Activated CD8-positive, alpha-beta T cell treated with anti-CD3 and anti-CD28 coated beads, Interleukin-2, amount 10 ng/mL, durations not matched to agents 7 days and 5 days (primary cell): ENCODE measurements at regions of chr16 and their contacts with region 1.

Region 1: DNA sequence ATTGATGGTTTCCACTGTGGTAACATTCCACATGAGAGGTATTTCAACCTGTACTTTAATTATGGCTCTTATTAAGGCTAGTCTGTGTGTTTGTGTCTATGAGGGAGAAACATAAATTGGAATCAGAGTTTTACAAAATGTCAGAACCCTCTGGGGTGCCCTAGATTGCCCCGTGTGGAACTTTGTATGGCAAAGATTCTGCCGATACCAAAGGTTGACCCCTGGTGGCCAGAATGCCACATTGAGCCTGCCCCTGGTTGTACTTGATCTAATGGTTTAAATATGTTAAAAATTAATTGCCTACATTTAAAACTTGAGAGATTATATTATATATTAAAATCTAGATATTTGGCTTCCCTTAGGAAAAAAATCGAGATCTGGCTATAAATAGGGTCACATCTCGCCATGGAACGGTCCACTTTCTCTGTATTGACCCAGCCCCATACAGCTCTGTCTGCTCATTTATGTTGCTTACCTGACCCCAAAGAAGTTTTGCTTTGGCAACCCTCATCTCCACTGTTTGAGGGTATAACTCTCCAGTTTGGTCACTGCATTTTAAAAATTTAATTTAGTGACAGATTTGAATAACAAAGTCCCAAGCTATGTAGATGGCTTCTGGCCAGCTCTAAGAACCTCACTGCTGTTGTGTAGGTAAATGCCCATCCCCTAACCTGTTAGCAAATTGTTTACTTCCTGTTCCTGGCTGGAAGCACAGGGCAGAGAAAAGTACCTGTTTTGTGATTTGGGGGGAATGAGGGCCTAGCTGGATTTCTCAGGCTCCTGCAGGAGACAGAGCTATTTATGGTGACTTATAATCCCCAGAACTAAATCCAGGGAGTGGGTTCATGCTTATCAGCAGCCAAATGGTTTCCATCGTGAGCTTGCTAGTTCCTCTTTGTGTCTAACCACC is 95.0 kb downstream of the PLCG2 start:
- DNase-seq: peak; percentile 81
- ATAC-seq: peak; percentile 90
- H3K4me3 Mint-ChIP-seq: no peak overlapping the region
- H3K27ac Mint-ChIP-seq: no peak overlapping the region
- H3K4me1 Mint-ChIP-seq: peaks cover 17% of the 10 kb centered on the region
- H3K27me3 Mint-ChIP-seq: peaks cover 4% of the 10 kb centered on the region

Region 2: DNA sequence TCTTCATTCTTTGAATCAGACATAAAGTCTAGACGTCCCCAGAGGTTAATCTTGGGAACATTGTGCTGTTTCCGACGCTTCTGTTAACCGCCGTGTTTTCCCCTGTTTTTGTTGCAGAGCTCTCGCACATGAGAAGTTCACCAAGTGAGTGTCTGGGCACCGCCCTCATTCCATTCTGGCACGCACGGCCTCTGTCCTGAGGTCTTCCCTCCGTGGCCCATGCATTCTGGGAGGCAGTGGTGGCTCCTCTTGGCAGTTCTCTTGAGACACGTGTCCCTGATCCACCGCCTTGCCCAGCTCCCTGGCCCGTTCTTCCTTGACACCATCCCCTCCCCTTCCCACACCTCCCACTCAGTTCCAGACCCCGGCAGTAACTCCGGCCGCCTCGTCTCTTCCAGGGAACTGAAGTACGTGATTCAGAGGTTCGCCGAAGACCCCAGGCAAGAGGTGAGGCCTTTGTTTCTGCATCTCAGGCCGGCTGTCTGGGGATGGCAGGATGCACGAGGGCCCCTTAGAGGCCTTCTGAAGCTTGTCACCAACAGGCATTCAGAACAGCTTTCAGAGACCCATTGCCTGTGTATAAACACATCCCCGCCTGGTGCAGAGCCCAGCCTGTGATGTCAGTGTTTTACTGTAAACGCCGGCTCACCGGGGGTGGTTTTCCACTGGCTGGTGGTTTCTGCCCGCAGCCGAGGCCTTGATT is 180.9 kb before region 1 on chr16:
- CTCF ChIA-PET with region 1: no interaction called
- POLR2A ChIA-PET with region 1: no interaction called
- DNase-seq: no peak
- ATAC-seq: no peak
- H3K4me3 Mint-ChIP-seq: no peak overlapping the region
- H3K27ac Mint-ChIP-seq: no peak overlapping the region
- H3K4me1 Mint-ChIP-seq: peaks cover 11% of the 10 kb centered on the region
- H3K27me3 Mint-ChIP-seq: no peaks in the 10 kb centered on the region

Region 3: GRCh38 chr16:81737885-81738786 is 136.0 kb before region 1 on chr16:
- CTCF ChIA-PET with region 1: interaction called, 12 read pairs
- POLR2A ChIA-PET with region 1: no interaction called
- DNase-seq: peak; percentile 91
- ATAC-seq: peak; percentile 96
- H3K4me3 Mint-ChIP-seq: peak overlapping the region; percentile 59
- H3K27ac Mint-ChIP-seq: peak overlapping the region; percentile 56
- H3K4me1 Mint-ChIP-seq: peaks cover 23% of the 10 kb centered on the region
- H3K27me3 Mint-ChIP-seq: peaks cover 11% of the 10 kb centered on the region

Region 4: DNA sequence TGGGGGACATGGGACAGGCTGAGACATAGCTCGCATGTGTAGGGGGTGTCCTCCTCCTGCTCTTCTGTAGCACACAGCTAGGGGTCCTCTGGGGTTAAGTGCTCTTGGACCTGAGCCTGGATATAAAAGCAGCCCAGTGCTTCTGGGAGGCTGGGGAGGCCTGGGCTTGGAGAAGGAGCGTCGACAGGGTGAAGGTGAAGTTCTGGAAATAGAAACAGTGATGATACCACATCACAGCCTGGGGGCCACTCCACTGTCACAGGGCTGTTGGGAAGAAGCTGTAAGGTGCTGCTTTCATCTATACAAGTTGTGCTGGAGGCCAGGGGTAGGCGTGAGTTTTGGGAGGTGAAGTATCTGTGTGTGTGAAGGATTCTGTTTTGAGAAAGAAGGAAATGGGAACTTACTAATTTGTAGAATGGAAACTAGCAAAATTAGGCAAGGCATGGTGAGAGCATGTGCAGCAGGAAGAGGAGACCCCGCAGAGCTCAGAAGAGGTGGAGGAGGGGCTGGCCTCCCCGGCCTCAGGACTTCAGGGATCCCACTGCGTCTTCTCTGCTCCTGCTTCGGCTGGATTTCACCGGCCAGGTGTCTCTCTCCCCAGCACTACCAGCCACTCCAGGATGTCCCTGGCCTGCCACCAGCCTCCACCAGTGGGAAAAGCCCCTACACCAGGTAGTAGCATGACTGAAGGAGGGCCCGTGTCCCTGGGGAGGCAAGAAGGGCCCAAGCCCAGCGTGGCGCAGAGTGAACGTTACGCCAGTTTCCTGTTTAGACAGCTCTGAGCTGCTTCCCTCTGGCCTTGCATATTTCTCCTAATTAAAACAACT is 75.6 kb before region 1 on chr16:
- CTCF ChIA-PET with region 1: interaction called, 13 read pairs
- POLR2A ChIA-PET with region 1: no interaction called
- DNase-seq: peak; percentile 49
- ATAC-seq: peak; percentile 59
- H3K4me3 Mint-ChIP-seq: peak overlapping the region; percentile 27
- H3K27ac Mint-ChIP-seq: peak overlapping the region; percentile 91
- H3K4me1 Mint-ChIP-seq: peaks cover 41% of the 10 kb centered on the region
- H3K27me3 Mint-ChIP-seq: peaks cover 2% of the 10 kb centered on the region

Region 5: DNA sequence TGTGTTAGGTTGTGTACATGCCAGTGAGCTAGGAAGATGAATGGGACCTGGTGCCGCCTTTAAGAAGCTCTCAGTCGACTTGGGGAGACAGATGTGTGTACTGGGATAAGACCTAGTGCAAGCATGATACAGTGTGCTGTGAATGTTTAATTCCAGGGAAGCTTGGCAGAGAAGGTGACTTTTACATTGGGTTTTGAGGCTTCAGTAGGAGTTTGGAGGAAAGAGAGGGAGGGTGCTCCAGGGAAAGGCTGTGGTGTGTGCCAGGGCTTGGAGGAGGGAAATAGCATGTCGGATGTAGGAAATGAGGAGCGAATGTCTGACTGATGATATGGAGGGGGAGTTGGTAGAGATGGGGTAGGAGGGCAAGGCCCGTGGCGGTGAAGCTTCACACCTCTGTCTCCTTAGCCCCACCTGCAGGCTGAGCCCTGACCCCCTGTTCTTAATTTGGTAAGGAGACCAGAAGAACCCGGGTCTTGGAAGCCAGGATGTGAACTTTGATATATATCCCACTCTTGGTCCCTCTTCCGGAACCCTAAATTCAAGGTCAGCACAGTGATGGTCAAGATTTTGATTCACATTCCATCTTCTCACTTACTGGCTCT is 18.4 kb before region 1 on chr16:
- CTCF ChIA-PET with region 1: interaction called, 22 read pairs
- POLR2A ChIA-PET with region 1: no interaction called
- DNase-seq: no peak
- ATAC-seq: no peak
- H3K4me3 Mint-ChIP-seq: no peak overlapping the region
- H3K27ac Mint-ChIP-seq: no peak overlapping the region
- H3K4me1 Mint-ChIP-seq: peaks cover 5% of the 10 kb centered on the region
- H3K27me3 Mint-ChIP-seq: no peaks in the 10 kb centered on the region

Region 6: GRCh38 chr16:81885976-81886586 is 12.0 kb after region 1 on chr16:
- CTCF ChIA-PET with region 1: interaction called, 41 read pairs
- POLR2A ChIA-PET with region 1: interaction called, 4 read pairs
- DNase-seq: peak; percentile 49
- ATAC-seq: peak; percentile 71
- H3K4me3 Mint-ChIP-seq: no peak overlapping the region
- H3K27ac Mint-ChIP-seq: no peak overlapping the region
- H3K4me1 Mint-ChIP-seq: no peaks in the 10 kb centered on the region
- H3K27me3 Mint-ChIP-seq: no peaks in the 10 kb centered on the region

Region 7: GRCh38 chr16:81940781-81941560 is 66.9 kb after region 1 on chr16:
- CTCF ChIA-PET with region 1: no interaction called
- POLR2A ChIA-PET with region 1: no interaction called
- DNase-seq: no peak
- ATAC-seq: no peak
- H3K4me3 Mint-ChIP-seq: no peak overlapping the region
- H3K27ac Mint-ChIP-seq: no peak overlapping the region
- H3K4me1 Mint-ChIP-seq: peaks cover 2% of the 10 kb centered on the region
- H3K27me3 Mint-ChIP-seq: no peaks in the 10 kb centered on the region